Activated B cell treated with CpG ODN at 0.5 μM for 24 hours (primary cell): ENCODE measurements at regions of chr6 and their contacts with region 1.

Region 1: GRCh38 chr6:38047562-38047961 is 228.0 kb downstream of the ZFAND3 start:
- DNase-seq: no peak
- ATAC-seq: no peak
- H3K4me3 Mint-ChIP-seq: no peak overlapping the region
- H3K27ac Mint-ChIP-seq: no peak overlapping the region
- H3K4me1 Mint-ChIP-seq: no peaks in the 10 kb centered on the region
- H3K27me3 Mint-ChIP-seq: no peaks in the 10 kb centered on the region
- CTCF ChIP-seq: no peak

Region 2: DNA sequence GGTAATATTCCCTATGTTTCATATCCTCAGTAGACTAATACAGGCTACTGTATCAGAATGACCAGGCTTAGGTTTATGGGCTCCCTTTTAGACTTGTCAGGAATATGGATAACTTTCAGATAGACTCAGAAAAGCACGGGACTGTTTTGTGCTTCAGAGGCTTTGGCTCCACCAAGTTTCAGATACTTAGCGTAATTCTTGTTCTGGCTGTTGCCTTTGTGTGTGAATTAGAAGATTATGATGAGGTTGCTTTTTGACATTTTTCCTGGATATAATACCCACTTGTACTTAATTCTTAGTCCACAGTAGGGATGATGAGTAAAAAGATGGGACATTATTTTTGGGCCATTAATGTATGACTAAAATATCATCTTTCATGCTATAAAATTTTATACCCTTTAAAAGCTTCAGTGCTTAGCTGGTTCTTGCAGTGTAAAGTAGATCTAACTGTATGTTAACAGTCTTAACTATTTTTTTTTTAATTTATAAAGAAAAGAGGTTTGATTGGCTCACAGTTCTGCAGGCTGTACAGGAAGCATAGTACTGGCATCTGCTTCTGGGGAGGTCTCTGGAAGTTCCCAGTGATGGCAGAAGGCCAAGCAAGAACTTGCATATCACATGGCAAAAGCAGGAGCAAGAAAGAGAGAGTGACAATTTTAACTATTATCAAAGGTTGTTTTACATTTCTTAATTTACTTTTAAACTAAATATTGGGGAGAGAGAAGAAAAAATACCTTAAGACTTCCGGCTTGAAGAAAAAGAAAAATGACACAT is 107.3 kb before region 1 on chr6:
- CTCF ChIA-PET with region 1: no interaction called
- POLR2A ChIA-PET with region 1: interaction called, 10 read pairs
- intact Hi-C with region 1: no loop called
- DNase-seq: no peak
- ATAC-seq: no peak
- H3K4me3 Mint-ChIP-seq: no peak overlapping the region
- H3K27ac Mint-ChIP-seq: no peak overlapping the region
- H3K4me1 Mint-ChIP-seq: peaks cover 64% of the 10 kb centered on the region
- H3K27me3 Mint-ChIP-seq: no peaks in the 10 kb centered on the region
- CTCF ChIP-seq: no peak

Region 3: GRCh38 chr6:38110481-38110971 is 63.0 kb after region 1 on chr6:
- CTCF ChIA-PET with region 1: no interaction called
- POLR2A ChIA-PET with region 1: no interaction called
- intact Hi-C with region 1: no loop called
- DNase-seq: no peak
- ATAC-seq: no peak
- H3K4me3 Mint-ChIP-seq: no peak overlapping the region
- H3K27ac Mint-ChIP-seq: no peak overlapping the region
- H3K4me1 Mint-ChIP-seq: no peaks in the 10 kb centered on the region
- H3K27me3 Mint-ChIP-seq: no peaks in the 10 kb centered on the region
- CTCF ChIP-seq: no peak